Sigmoid colon (tissue), 7 donors: ENCODE measurements at regions of chr15 and their contacts with region 1.

Region 1: DNA sequence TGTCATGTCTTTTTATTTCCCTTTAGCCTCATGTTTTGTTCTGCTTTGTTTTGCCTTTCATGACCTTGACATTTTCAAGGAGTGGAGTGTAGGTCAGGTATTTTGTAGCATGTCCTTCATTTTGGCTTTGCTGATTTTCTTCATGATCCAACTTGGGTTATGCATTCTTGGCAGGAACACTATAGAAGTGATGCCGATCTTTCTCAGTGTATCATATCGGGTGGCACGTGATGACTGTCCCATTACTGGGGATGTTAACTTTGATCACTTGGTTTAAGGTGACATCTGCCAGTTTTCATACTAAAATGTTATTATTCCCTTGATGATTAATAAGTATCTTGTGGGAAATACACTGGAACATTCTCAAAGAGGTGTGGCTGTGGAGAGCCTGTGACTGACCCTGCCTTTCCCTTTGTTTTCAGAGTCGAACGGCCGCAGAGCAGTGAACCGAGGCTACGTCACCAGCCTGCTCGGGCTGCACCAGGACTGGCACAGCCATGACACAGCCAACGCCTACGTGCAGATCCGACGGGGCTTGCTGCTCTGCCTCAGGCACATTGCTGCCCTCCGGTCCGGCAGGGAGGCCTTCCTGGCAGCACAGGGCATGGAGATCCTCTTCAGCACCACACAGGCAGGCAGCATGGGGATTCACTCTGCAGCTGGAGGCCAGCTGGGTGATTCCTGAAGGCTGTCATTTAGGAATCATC is 167.7 kb downstream of the AGBL1 start:
- DNase-seq: no peak
- H3K4me3 ChIP-seq: no peak overlapping the region
- H3K27ac ChIP-seq: no peak overlapping the region
- H3K4me1 ChIP-seq: no peaks in the 10 kb centered on the region
- H3K27me3 ChIP-seq: no peaks in the 10 kb centered on the region
- CTCF ChIP-seq: no peak
- EP300 ChIP-seq: no peak
- POLR2A ChIP-seq: no peak

Region 2: GRCh38 chr15:86316726-86317383 is 69.5 kb after region 1 on chr15:
- intact Hi-C with region 1: loop called (anchors 2 kb)
- DNase-seq: no peak
- H3K4me3 ChIP-seq: no peak overlapping the region
- H3K27ac ChIP-seq: peak overlapping the region in 2 of 4 donors; percentile 24 to 49
- H3K4me1 ChIP-seq: no peaks in the 10 kb centered on the region
- H3K27me3 ChIP-seq: no peaks in the 10 kb centered on the region
- CTCF ChIP-seq: no peak
- EP300 ChIP-seq: no peak
- POLR2A ChIP-seq: no peak

Region 3: DNA sequence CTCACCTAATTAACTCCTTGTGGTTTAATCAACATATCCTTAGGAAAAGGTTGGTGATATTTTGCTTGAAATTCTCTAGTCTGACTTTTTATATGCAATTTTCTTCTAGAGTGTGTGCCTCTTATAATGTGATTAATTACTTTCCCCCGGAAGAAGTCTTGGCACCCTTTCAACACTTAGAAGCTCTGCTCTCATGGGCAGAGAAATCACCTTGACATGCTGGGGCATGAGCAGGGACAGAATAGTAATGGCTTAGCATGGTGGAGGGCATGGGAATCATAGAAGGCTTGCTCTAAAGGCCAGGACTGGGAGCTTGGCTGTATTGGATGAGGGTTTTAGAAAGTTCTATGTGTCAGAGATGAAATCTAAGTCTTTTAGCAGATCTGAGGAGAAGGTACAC is 125.7 kb after region 1 on chr15:
- intact Hi-C with region 1: no loop called
- DNase-seq: no peak
- H3K4me3 ChIP-seq: no peak overlapping the region
- H3K27ac ChIP-seq: no peak overlapping the region
- H3K4me1 ChIP-seq: no peaks in the 10 kb centered on the region
- H3K27me3 ChIP-seq: no peaks in the 10 kb centered on the region
- CTCF ChIP-seq: no peak
- EP300 ChIP-seq: no peak
- POLR2A ChIP-seq: no peak